ENCODE measurements at regions of chr7 and their contacts with region 1.

Region 1: DNA sequence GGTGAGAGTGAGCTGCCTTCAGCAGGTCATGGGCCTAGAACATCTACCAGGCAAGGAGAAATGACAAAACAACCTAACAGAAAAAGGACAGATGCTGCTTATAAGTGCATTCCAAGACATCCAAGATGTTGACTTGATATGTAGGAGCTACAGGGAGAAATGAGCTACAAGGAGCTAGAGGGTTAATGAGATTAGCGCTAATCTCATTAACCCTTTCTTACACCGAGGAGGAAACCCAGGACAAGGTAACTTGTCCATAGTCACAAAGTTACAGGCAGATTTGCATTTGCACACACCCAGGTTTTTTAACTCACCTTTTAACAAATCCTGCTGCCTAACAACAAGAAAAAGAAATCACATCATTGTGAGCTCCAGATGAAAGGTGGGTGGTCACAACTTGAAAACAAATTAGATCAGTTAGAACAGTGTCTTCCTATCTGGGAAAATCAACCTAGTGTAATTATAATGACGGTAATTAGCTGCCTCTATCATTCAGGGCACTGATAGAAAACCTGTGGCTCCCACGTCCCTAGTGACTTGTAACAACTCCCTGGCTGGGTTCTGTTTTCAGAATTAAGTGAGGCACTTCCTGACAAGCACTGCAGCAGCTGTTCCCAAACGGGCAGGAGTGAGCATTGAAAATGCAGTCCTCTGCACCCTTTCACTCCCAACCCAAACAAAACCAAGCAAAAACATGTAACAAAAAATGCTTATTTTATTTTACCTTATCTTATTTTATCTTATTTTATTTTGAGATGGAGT is 5.7 kb downstream of the KIAA1549 start:
- DNase-seq: no peak
- ATAC-seq: no peak
- H3K4me3 ChIP-seq: no peak overlapping the region
- H3K27ac ChIP-seq: no peak overlapping the region
- H3K4me1 ChIP-seq: peaks cover 16% of the 10 kb centered on the region
- H3K27me3 ChIP-seq: no peaks in the 10 kb centered on the region
- CTCF ChIP-seq: no peak

Region 2: DNA sequence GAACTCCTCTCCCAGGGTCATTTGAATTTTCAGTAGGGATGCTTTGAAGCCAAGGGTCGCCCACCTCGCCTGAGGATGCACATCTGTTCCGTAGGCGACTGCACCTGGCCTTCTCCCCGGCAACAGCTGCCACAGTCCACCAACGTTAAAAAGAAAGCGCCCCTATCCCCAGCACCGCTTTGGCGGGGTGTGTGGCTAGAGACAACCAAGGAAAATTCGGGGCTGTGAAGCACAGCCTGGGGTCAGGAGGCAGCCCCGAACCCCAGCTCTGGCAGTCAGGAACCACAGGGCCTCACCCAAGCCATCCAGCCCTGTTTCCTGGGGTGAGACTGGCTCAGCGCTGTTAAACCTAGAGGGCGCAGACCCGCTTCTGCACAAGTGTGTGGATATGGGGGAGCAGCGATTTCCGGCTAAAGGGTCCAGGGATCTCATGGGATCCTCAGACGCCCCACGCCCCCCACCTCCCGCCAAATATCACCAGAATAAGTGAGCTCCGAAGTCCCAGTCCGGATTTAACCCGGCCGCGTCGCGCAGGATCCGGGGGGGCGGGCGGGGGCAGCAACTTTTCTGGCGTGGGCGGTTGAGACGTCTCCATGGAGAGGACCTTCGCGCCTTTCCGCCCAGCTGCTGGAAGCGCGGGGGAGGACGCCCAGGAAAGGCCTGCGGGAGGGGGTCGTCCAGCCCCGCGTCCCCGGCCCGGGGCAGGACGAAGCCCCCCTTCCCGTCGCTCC is 59.5 kb after region 1 on chr7:
- CTCF ChIA-PET with region 1: interaction called, 10 read pairs
- POLR2A ChIA-PET with region 1: no interaction called
- in situ Hi-C with region 1: no loop called
- intact Hi-C with region 1: no loop called
- DNase-seq: no peak
- ATAC-seq: peak; percentile 58
- H3K4me3 ChIP-seq: peak overlapping the region; percentile 76 to 78
- H3K27ac ChIP-seq: peak overlapping the region; percentile 92
- H3K4me1 ChIP-seq: peaks cover 15% of the 10 kb centered on the region
- H3K27me3 ChIP-seq: no peaks in the 10 kb centered on the region
- CTCF ChIP-seq: no peak

Measured in Panc1 (cell line).